ENCODE measurements at regions of chr18 and their contacts with region 1.

Region 1: GRCh38 chr18:75223687-75224347 is 13.2 kb downstream of the TSHZ1 start:
- DNase-seq: no peak
- H3K4me3 ChIP-seq: no peak overlapping the region
- H3K27ac ChIP-seq: no peak overlapping the region
- H3K4me1 ChIP-seq: peaks cover 0 to 7% of the 10 kb centered on the region in 2 donors
- H3K27me3 ChIP-seq: no peaks in the 10 kb centered on the region
- CTCF ChIP-seq: no peak
- POLR2A ChIP-seq: no peak

Region 2: GRCh38 chr18:75350512-75350839 is 126.7 kb after region 1 on chr18:
- intact Hi-C with region 1: loop called (anchors 5 kb)
- DNase-seq: no peak
- H3K4me3 ChIP-seq: no peak overlapping the region
- H3K27ac ChIP-seq: no peak overlapping the region
- H3K4me1 ChIP-seq: no peaks in the 10 kb centered on the region
- H3K27me3 ChIP-seq: no peaks in the 10 kb centered on the region
- CTCF ChIP-seq: no peak
- POLR2A ChIP-seq: no peak